ENCODE measurements at regions of chr6 and their contacts with region 1.

Region 1: DNA sequence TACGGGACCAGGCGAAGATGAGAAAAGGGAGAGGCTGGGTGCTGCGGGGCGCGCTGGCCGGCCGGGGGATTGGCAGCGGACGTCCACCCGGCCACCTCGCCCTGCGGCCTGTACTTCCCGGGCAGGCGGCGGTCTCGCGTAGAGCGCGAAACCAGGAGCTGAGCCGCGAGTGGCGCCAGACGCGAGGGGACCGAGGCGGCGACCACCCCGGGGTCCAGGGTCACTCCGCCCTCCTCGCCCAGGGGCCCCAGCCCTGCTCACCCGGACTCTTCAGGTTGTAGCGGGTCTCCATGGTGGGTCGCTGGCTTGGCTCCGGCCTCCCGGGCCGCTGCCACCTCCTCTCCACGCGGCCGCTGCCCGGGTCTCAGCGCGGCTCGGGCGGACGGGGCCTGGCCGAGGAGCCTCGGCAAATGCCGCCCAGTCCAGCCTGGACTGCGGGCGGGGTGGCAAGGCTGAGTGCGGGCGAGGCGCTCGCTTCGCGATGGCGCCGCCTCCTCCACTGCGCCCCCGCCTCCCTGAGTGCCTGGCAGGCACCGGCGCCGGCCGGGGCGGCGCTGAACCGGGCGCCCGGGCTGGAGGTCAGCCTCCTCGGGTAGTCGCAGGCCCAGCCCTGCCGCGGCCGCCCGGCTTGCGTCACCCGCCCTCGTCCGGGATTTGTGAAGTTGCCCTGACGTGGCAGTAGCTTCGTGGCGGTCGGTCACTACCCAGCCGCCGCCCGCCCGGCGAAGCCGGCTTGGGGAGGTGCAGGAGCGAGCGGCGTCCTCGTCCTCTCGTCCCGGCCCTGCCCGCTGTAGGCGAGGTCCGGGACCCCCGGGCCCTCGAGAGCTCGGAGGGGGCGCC is at the start of gene UBE2J1:
- H3K4me3 ChIP-seq: peak within 1 kb of the TSS; percentile 91
- H3K27ac ChIP-seq: peak within 1 kb of the TSS; percentile 99
- H3K4me1 ChIP-seq: peaks cover 15% of the 10 kb centered on the region
- CTCF ChIP-seq: peak; percentile 89

Region 2: DNA sequence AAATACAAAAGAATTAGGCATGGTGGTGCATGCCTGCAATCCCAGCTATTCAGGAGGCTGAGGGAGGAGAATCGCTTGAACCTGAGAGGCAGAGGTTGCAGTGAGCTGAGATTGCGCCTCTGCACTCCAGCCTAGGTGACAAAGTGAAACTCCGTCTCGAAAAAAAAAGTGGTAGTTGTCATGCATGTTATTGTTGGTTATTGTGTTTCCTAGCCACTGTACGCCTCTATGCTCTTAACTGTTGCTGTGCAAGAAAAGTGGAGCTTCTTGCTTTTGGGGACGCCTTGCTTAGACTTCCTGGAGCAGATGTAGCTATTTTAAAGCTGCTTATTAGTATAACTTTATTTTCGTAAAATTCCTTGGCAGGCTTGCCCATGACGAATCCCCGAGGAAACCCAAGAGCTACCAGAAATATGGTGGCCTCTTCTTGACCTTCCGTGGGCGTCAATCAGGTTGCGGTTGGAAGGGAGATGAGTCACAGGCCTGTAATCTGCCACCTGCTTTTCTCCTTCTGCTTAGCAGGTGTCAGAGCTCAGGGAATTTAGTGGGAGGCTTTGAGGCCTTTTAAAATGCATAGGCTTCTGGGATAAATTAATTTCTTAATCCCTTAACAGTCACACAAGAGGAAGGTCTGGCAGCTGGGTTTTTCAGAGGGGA is 54.7 kb before region 1 on chr6:
- CTCF ChIA-PET with region 1: interaction called, 3 read pairs
- POLR2A ChIA-PET with region 1: interaction called, 16 read pairs
- H3K4me3 ChIP-seq: peak overlapping the region; percentile 17
- H3K27ac ChIP-seq: peak overlapping the region; percentile 78; the same call in 1 of the 2 replicates
- H3K4me1 ChIP-seq: peaks cover 17% of the 10 kb centered on the region; the same call in 1 of the 2 replicates
- CTCF ChIP-seq: no peak

Region 3: GRCh38 chr6:89378628-89379027 is 26.1 kb after region 1 on chr6:
- CTCF ChIA-PET with region 1: interaction called, 20 read pairs
- POLR2A ChIA-PET with region 1: no interaction called
- H3K4me3 ChIP-seq: no peak overlapping the region
- H3K27ac ChIP-seq: no peak overlapping the region
- H3K4me1 ChIP-seq: peaks cover 11% of the 10 kb centered on the region
- CTCF ChIP-seq: no peak

Measured in HEK293 (cell line).